Left lung (tissue), 14 donors: ENCODE measurements at regions of chr4 and their contacts with region 1.

Region 1: GRCh38 chr4:74675673-74676279 is 118.5 kb downstream of the BTC start:
- DNase-seq: peak in 2 of 4 donors; percentile 12 to 55
- ATAC-seq: peak; percentile 93
- H3K4me3 ChIP-seq: no peak overlapping the region
- H3K27ac ChIP-seq: no peak overlapping the region
- H3K4me1 ChIP-seq: peaks cover 0 to 2% of the 10 kb centered on the region in 2 donors
- H3K27me3 ChIP-seq: no peaks in the 10 kb centered on the region
- CTCF ChIP-seq: peak; percentile 65 to 68

Region 2: GRCh38 chr4:74376888-74377483 is 298.8 kb before region 1 on chr4:
- intact Hi-C with region 1: loop called in 1 of 2 experiments (anchors 5 kb)
- DNase-seq: peak in 1 of 4 donors; percentile 57
- ATAC-seq: peak; percentile 89
- H3K4me3 ChIP-seq: no peak overlapping the region
- H3K27ac ChIP-seq: no peak overlapping the region
- H3K4me1 ChIP-seq: no peaks in the 10 kb centered on the region
- H3K27me3 ChIP-seq: no peaks in the 10 kb centered on the region
- CTCF ChIP-seq: peak; percentile 52 to 57

Region 3: GRCh38 chr4:74531963-74532794 is 143.6 kb before region 1 on chr4:
- intact Hi-C with region 1: loop called in 1 of 2 experiments (anchors 10 kb)
- DNase-seq: peak in 1 of 4 donors; percentile 36
- ATAC-seq: peak; percentile 84
- H3K4me3 ChIP-seq: no peak overlapping the region
- H3K27ac ChIP-seq: no peak overlapping the region
- H3K4me1 ChIP-seq: no peaks in the 10 kb centered on the region
- H3K27me3 ChIP-seq: no peaks in the 10 kb centered on the region
- CTCF ChIP-seq: peak in 1 of 2 donors; percentile 40

Region 4: GRCh38 chr4:74640111-74640903 is 35.5 kb before region 1 on chr4:
- intact Hi-C with region 1: no loop called
- DNase-seq: peak in 2 of 4 donors; percentile 68 to 74
- ATAC-seq: peak; percentile 47
- H3K4me3 ChIP-seq: no peak overlapping the region
- H3K27ac ChIP-seq: no peak overlapping the region
- H3K4me1 ChIP-seq: no peaks in the 10 kb centered on the region
- H3K27me3 ChIP-seq: no peaks in the 10 kb centered on the region
- CTCF ChIP-seq: no peak